IMR-90 (cell line): ENCODE measurements at regions of chr10 and their contacts with region 1.

Region 1: GRCh38 chr10:73110345-73110849 is at the start of gene NUDT13:
- DNase-seq: peak; percentile 73
- ATAC-seq: peak; percentile 90
- H3K4me3 ChIP-seq: peak within 1 kb of the TSS; percentile 55
- H3K27ac ChIP-seq: peak within 1 kb of the TSS; percentile 68
- H3K4me1 ChIP-seq: peaks cover 5% of the 10 kb centered on the region; the same call in 1 of the 2 replicates
- H3K27me3 ChIP-seq: no peaks in the 10 kb centered on the region
- CTCF ChIP-seq: no peak
- POLR2A ChIP-seq: no peak
- RAD21 ChIP-seq: no peak
- total RNA-seq, gene NUDT13: 0.90 and 1.1 TPM in 2 replicates

Region 2: GRCh38 chr10:73003822-73004221 is 106.6 kb before region 1 on chr10:
- CTCF ChIA-PET with region 1: no interaction called
- POLR2A ChIA-PET with region 1: no interaction called
- dilution Hi-C with region 1: no loop called
- in situ Hi-C with region 1: no loop called
- intact Hi-C with region 1: no loop called
- DNase-seq: no peak
- ATAC-seq: no peak
- H3K4me3 ChIP-seq: no peak overlapping the region
- H3K27ac ChIP-seq: no peak overlapping the region
- H3K4me1 ChIP-seq: peaks cover 3% of the 10 kb centered on the region
- H3K27me3 ChIP-seq: no peaks in the 10 kb centered on the region
- CTCF ChIP-seq: no peak
- POLR2A ChIP-seq: no peak
- RAD21 ChIP-seq: no peak

Region 3: GRCh38 chr10:73079779-73080541 is 30.4 kb before region 1 on chr10:
- CTCF ChIA-PET with region 1: no interaction called
- POLR2A ChIA-PET with region 1: no interaction called
- dilution Hi-C with region 1: no loop called
- in situ Hi-C with region 1: no loop called
- intact Hi-C with region 1: no loop called
- DNase-seq: no peak
- ATAC-seq: no peak
- H3K4me3 ChIP-seq: no peak overlapping the region
- H3K27ac ChIP-seq: no peak overlapping the region
- H3K4me1 ChIP-seq: peaks cover 7% of the 10 kb centered on the region; the same call in 1 of the 2 replicates
- H3K27me3 ChIP-seq: no peaks in the 10 kb centered on the region
- CTCF ChIP-seq: no peak
- POLR2A ChIP-seq: no peak
- RAD21 ChIP-seq: no peak

Region 4: GRCh38 chr10:73159038-73159648 is 48.7 kb after region 1 on chr10:
- CTCF ChIA-PET with region 1: interaction called, 3 read pairs
- POLR2A ChIA-PET with region 1: no interaction called
- dilution Hi-C with region 1: no loop called
- in situ Hi-C with region 1: no loop called
- intact Hi-C with region 1: loop called (anchors 5 kb)
- DNase-seq: peak; percentile 55
- ATAC-seq: peak; percentile 80
- H3K4me3 ChIP-seq: no peak overlapping the region
- H3K27ac ChIP-seq: no peak overlapping the region
- H3K4me1 ChIP-seq: no peaks in the 10 kb centered on the region
- H3K27me3 ChIP-seq: no peaks in the 10 kb centered on the region
- CTCF ChIP-seq: peak; percentile 76
- POLR2A ChIP-seq: no peak
- RAD21 ChIP-seq: peak; percentile 63